PC-3 (cell line): ENCODE measurements at regions of chr14 and their contacts with region 1.

Region 1: GRCh38 chr14:39015360-39015961 is 87.6 kb downstream of the SEC23A start:
- DNase-seq: peak; percentile 66
- ATAC-seq: peak; percentile 64; the same call in 1 of the 2 replicates
- H3K4me3 ChIP-seq: no peak overlapping the region
- H3K27ac ChIP-seq: no peak overlapping the region
- H3K4me1 ChIP-seq: no peaks in the 10 kb centered on the region
- H3K27me3 ChIP-seq: no peaks in the 10 kb centered on the region
- CTCF ChIP-seq: peak; percentile 91

Region 2: GRCh38 chr14:37903343-37904191 is 1111.9 kb before region 1 on chr14:
- CTCF ChIA-PET with region 1: no interaction called
- POLR2A ChIA-PET with region 1: no interaction called
- intact Hi-C with region 1: loop called (anchors 1 kb)
- DNase-seq: peak; percentile 83
- ATAC-seq: peak; percentile 78
- H3K4me3 ChIP-seq: peak overlapping the region; percentile 18; the same call in 1 of the 2 replicates
- H3K27ac ChIP-seq: no peak overlapping the region
- H3K4me1 ChIP-seq: no peaks in the 10 kb centered on the region
- H3K27me3 ChIP-seq: peaks cover 24% of the 10 kb centered on the region; the same call in 1 of the 2 replicates
- CTCF ChIP-seq: peak; percentile 82

Region 3: DNA sequence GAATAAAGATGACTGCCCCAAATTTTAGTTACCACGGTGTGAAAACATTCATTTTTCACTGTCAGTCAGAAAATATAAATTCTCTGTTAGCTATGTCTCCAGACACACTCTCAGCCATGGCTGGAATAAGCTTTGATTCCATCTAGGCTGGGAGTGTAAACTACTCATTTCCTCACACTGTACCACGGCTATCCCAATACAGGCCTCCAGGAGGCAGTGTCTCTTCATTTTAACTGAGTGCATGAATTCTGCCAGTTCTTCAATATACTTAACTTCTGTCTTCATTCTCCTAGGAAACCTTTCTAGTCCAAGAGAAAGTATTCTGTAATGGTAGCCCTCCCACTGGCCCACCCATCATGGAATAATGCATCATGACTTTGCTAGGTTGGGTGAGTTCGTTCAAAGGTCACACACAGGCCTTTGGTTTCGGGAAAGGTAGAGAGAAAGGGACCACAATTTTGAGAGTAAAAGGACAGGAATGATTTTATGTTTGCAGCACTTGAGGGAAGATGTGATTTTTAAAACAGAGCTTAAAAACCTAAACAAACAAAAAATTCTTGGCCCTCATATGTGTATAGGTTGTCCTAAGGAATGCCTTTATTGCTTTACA is 293.5 kb before region 1 on chr14:
- CTCF ChIA-PET with region 1: interaction called, 4 read pairs
- POLR2A ChIA-PET with region 1: no interaction called
- intact Hi-C with region 1: loop called (anchors 1 kb)
- DNase-seq: peak; percentile 81
- ATAC-seq: peak; percentile 90
- H3K4me3 ChIP-seq: no peak overlapping the region
- H3K27ac ChIP-seq: no peak overlapping the region
- H3K4me1 ChIP-seq: no peaks in the 10 kb centered on the region
- H3K27me3 ChIP-seq: no peaks in the 10 kb centered on the region
- CTCF ChIP-seq: peak; percentile 89

Region 4: DNA sequence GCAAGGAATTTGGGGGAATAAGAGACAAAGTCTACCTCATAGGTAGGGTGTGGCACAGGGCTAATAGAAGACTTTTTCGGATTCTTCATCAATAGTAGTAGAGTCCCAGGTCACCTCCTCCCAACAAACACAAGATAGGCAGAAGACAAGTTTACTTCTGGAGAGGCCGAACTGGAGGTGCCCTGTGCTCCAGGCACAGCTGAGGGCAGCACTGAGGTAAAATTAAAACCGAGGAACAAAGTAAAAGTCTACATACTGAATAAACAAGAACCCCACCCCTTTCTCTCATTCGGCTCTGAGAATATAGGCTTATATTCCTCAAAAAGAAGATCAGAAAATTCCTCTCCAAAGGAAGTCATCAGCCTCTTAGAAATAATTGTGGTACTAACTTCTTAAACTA is 74.0 kb before region 1 on chr14:
- CTCF ChIA-PET with region 1: interaction called, 3 read pairs
- POLR2A ChIA-PET with region 1: no interaction called
- intact Hi-C with region 1: loop called (anchors 2 kb)
- DNase-seq: no peak
- ATAC-seq: peak; percentile 37; the same call in 1 of the 2 replicates
- H3K4me3 ChIP-seq: no peak overlapping the region
- H3K27ac ChIP-seq: no peak overlapping the region
- H3K4me1 ChIP-seq: no peaks in the 10 kb centered on the region
- H3K27me3 ChIP-seq: no peaks in the 10 kb centered on the region
- CTCF ChIP-seq: no peak; the same call in 1 of the 2 replicates